ENCODE measurements at regions of chr3 and their contacts with region 1.

Region 1: GRCh38 chr3:4807381-4808280 is 171.6 kb upstream of the BHLHE40 start:
- DNase-seq: no peak
- H3K4me3 Mint-ChIP-seq: no peak overlapping the region
- H3K27ac Mint-ChIP-seq: no peak overlapping the region
- H3K4me1 Mint-ChIP-seq: peaks cover 28% of the 10 kb centered on the region
- H3K27me3 Mint-ChIP-seq: no peaks in the 10 kb centered on the region

Region 2: DNA sequence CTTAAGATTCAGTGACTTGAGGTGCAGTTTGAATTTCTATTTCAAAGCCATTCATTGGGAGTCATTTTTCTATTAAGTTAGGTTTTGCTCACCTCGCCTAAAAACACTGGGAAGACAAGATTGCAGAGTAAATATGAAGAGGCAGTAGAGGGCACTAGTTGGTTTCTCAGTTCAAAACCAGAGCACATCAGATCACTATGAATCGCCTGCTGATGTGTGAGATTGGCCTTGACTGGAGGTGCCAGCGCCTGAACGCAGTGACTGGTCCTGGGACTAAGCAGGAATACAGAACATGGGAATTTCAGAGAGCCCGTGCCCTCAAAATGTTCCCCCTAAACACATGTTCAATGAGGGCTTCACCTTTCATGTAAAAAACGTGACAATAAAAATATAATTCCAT is 85.5 kb before region 1 on chr3:
- CTCF ChIA-PET with region 1: interaction called, 9 read pairs
- intact Hi-C with region 1: loop called (anchors 2 kb)
- DNase-seq: peak; percentile 53
- H3K4me3 Mint-ChIP-seq: no peak overlapping the region
- H3K27ac Mint-ChIP-seq: peak overlapping the region; percentile 30
- H3K4me1 Mint-ChIP-seq: peaks cover 6% of the 10 kb centered on the region
- H3K27me3 Mint-ChIP-seq: no peaks in the 10 kb centered on the region

Region 3: DNA sequence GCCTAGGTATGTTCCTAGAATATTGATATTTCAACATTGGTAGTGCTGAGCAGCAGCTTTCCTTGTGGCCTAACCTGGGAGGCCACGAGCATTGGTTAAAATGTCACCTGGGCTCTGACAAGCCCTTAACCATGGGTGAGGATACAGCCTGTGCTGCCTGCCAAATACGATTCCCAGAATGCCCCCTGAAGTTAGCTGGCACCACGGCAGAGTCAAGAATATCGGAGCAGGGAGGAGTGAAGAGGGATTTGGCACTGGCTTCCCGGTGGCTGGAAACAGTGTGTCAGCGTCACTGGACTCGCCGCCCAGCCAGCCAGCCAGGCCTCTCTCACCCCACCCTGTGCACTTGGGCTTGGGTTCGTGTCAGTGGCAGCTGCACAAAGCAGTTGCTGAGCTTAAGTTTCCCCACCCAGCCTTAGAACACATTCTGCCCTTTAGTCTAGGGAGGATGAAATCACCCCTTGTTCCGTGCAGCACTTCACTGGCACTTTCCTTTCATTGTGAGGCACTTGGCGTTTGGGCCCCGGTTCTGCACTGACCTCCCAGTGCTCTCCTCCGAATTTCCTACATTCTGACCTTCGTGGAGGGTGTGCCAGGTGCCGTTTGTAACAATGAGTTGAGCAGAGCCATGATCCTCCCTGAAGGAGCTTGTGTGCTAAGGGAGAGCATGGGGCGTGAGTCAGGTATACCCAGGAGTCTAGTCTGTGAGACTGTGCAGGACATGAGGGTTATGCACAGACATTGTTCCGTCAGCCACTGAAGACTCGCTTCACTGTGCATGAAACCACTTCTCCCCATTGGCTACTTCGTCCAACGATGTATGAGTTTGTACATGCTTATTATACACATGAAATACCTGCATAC is 18.8 kb after region 1 on chr3:
- CTCF ChIA-PET with region 1: interaction called, 12 read pairs
- intact Hi-C with region 1: loop called (anchors 1 kb)
- DNase-seq: no peak
- H3K4me3 Mint-ChIP-seq: no peak overlapping the region
- H3K27ac Mint-ChIP-seq: peak overlapping the region; percentile 57
- H3K4me1 Mint-ChIP-seq: peaks cover 93% of the 10 kb centered on the region
- H3K27me3 Mint-ChIP-seq: no peaks in the 10 kb centered on the region

Region 4: DNA sequence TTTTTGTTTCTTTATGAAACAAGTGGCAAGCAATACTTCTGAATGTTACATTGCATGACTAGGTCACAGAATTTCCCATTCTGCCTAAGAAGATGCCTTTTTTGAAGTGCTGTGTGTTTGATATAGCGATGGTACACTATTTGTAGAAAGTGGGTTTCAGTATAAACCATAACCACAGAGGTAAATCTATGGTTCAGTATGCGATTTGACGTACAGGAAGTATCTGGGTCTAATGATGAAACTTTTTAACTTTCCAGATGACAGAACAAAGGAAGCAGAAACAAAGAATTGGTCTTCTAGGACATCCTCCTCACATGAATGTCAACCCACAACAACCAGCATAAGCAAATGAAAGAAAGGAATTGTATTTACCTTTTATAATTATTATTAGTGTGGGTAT is 38.3 kb after region 1 on chr3:
- CTCF ChIA-PET with region 1: no interaction called
- intact Hi-C with region 1: loop called (anchors 1 kb)
- DNase-seq: no peak
- H3K4me3 Mint-ChIP-seq: no peak overlapping the region
- H3K27ac Mint-ChIP-seq: peak overlapping the region; percentile 93
- H3K4me1 Mint-ChIP-seq: peaks cover 94% of the 10 kb centered on the region
- H3K27me3 Mint-ChIP-seq: no peaks in the 10 kb centered on the region